ENCODE measurements at regions of chr14 and their contacts with region 1.

Region 1: GRCh38 chr14:22375321-22375930 is 213.6 kb downstream of the DAD1 start:
- DNase-seq: no peak
- ATAC-seq: peak; percentile 75
- H3K4me3 ChIP-seq: no peak overlapping the region
- H3K27ac ChIP-seq: no peak overlapping the region
- H3K4me1 ChIP-seq: no peaks in the 10 kb centered on the region
- H3K27me3 ChIP-seq: no peaks in the 10 kb centered on the region
- CTCF ChIP-seq: peak; percentile 50 to 60 (median 50)
- EP300 ChIP-seq: no peak
- POLR2A ChIP-seq: no peak
- RAD21 ChIP-seq: peak; percentile 79

Region 2: DNA sequence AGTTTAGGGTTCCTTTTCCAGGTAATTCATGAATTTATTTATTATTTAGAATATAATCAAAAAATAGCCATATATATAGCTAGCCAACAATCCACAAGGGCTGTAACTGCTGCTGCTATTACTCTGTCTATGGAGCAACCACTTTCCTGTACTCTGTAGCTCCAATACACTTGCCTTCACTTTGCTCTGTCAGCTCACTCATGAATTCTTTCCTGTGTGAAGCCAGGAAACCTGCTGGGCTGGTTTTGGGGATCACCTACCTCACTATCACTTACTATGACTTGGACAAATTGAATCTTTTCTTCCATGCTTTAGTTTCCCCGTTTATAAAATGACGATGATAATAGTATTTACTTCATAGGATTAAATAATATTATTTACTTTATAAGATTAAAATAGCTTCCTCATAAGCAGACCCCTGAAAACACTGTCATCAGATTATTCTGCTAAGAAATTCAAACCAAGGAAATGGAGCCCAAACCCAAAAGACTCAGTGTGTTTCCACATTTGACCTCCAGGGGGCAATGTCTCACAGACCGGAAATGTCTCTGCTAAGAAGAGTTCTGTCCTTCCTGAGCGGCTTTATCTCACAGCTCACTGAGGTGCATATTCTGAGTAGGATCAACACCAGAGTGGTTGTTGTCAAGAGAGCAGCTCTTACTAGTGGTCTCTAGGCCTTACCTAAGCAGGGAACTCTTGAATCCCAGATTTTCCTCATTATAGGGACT is 243.5 kb before region 1 on chr14:
- CTCF ChIA-PET with region 1: no interaction called
- POLR2A ChIA-PET with region 1: no interaction called
- RAD21 ChIA-PET with region 1: no interaction called
- SMC1A ChIA-PET with region 1: no interaction called
- in situ Hi-C with region 1: no loop called
- intact Hi-C with region 1: no loop called
- DNase-seq: no peak
- ATAC-seq: no peak
- H3K4me3 ChIP-seq: no peak overlapping the region
- H3K27ac ChIP-seq: no peak overlapping the region
- H3K4me1 ChIP-seq: no peaks in the 10 kb centered on the region
- H3K27me3 ChIP-seq: no peaks in the 10 kb centered on the region
- CTCF ChIP-seq: peak; percentile 23 to 61 (median 39); a peak in 5 of 6 replicates
- EP300 ChIP-seq: no peak
- POLR2A ChIP-seq: no peak
- RAD21 ChIP-seq: no peak

Region 3: GRCh38 chr14:22200977-22201605 is 174.3 kb before region 1 on chr14:
- CTCF ChIA-PET with region 1: interaction called, 18 read pairs
- POLR2A ChIA-PET with region 1: no interaction called
- RAD21 ChIA-PET with region 1: interaction called, 5 read pairs
- SMC1A ChIA-PET with region 1: interaction called, 5 read pairs
- in situ Hi-C with region 1: no loop called
- intact Hi-C with region 1: no loop called
- DNase-seq: peak; percentile 3
- ATAC-seq: peak; percentile 93
- H3K4me3 ChIP-seq: no peak overlapping the region
- H3K27ac ChIP-seq: no peak overlapping the region
- H3K4me1 ChIP-seq: no peaks in the 10 kb centered on the region
- H3K27me3 ChIP-seq: no peaks in the 10 kb centered on the region; a peak in 1 of 4 replicates
- CTCF ChIP-seq: peak; percentile 64 to 72 (median 65); a peak in 5 of 6 replicates
- EP300 ChIP-seq: no peak
- POLR2A ChIP-seq: no peak
- RAD21 ChIP-seq: peak; percentile 64

Region 4: GRCh38 chr14:22276913-22277816 is 98.3 kb before region 1 on chr14:
- CTCF ChIA-PET with region 1: interaction called, 10 read pairs
- POLR2A ChIA-PET with region 1: no interaction called
- RAD21 ChIA-PET with region 1: interaction called, 6 read pairs
- SMC1A ChIA-PET with region 1: interaction called, 36 read pairs
- in situ Hi-C with region 1: no loop called
- intact Hi-C with region 1: no loop called
- DNase-seq: no peak
- ATAC-seq: 0 out of 3 replicates have a peak, but pooled peaks have one; percentile 31
- H3K4me3 ChIP-seq: no peak overlapping the region
- H3K27ac ChIP-seq: no peak overlapping the region
- H3K4me1 ChIP-seq: no peaks in the 10 kb centered on the region
- H3K27me3 ChIP-seq: peaks cover 0 to 5% of the 10 kb centered on the region in 2 experiments; a peak in 3 of 4 replicates
- CTCF ChIP-seq: peak; percentile 53 to 69 (median 56)
- EP300 ChIP-seq: no peak
- POLR2A ChIP-seq: no peak
- RAD21 ChIP-seq: peak; percentile 49

Region 5: DNA sequence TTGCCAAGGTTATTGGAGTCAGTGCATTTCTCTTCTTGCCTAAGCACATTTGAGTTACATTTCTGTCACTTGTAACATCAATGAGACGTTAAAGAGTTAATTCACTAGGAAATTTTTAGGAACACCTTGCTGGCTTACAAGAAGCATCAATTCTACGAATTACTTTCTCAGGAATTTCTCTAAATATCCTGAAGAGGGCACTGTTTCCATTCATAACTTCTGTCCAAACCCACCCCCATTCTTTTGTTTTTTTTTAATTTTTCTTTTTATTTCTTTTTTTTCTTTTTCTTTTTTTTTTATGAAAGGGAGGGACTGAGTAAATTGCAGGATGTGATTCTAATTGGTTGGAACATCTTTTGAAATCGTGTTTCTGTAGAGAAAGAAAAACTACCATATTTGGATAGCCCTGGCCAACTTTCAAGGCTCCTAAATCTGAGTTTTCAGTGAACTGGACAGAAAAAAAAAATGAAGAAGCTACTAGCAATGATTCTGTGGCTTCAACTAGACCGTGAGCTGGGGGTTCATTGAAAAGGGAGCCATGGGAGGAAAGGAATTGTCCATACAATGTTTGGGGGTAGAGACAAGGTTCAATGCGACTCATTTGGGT is 71.7 kb before region 1 on chr14:
- CTCF ChIA-PET with region 1: interaction called, 22 read pairs
- POLR2A ChIA-PET with region 1: no interaction called
- RAD21 ChIA-PET with region 1: interaction called, 7 read pairs
- SMC1A ChIA-PET with region 1: interaction called, 14 read pairs
- in situ Hi-C with region 1: no loop called
- intact Hi-C with region 1: no loop called
- DNase-seq: no peak
- ATAC-seq: no peak
- H3K4me3 ChIP-seq: no peak overlapping the region
- H3K27ac ChIP-seq: no peak overlapping the region
- H3K4me1 ChIP-seq: no peaks in the 10 kb centered on the region
- H3K27me3 ChIP-seq: 0 out of 4 replicates have a peak, but pooled peaks cover 0 to 5% of the 10 kb centered on the region in 2 experiments
- CTCF ChIP-seq: peak; percentile 39 to 48 (median 44); a peak in 4 of 6 replicates
- EP300 ChIP-seq: no peak
- POLR2A ChIP-seq: no peak
- RAD21 ChIP-seq: peak; percentile 61

Region 6: GRCh38 chr14:22333422-22334276 is 41.8 kb before region 1 on chr14:
- CTCF ChIA-PET with region 1: interaction called, 22 read pairs
- POLR2A ChIA-PET with region 1: no interaction called
- RAD21 ChIA-PET with region 1: interaction called, 4 read pairs
- SMC1A ChIA-PET with region 1: interaction called, 8 read pairs
- in situ Hi-C with region 1: no loop called
- intact Hi-C with region 1: loop called (anchors 5 kb)
- DNase-seq: no peak
- ATAC-seq: peak; percentile 64
- H3K4me3 ChIP-seq: no peak overlapping the region
- H3K27ac ChIP-seq: no peak overlapping the region
- H3K4me1 ChIP-seq: no peaks in the 10 kb centered on the region
- H3K27me3 ChIP-seq: no peaks in the 10 kb centered on the region
- CTCF ChIP-seq: no peak
- EP300 ChIP-seq: peak in 1 of 2 experiments; percentile 26; a peak in 1 of 4 replicates
- POLR2A ChIP-seq: no peak
- RAD21 ChIP-seq: no peak

Region 7: DNA sequence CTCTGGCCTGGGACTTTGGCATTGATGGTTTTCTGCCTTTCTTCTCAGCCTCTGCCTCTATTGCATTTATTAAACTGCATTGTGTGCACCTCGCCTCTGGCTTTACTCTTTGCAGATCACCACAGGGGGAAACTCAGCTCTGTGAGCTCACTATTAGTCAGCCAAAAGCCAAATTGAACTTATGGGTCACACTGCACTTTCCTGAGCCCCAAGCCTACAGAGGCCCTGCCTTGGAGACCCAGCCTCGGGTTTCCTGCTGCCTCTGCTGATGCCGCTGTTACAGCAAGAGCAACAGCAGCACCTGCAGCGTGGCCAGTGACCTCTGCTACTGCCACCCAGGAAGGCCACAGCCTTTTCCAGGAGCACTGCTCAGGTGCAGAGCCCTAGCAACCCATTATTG is 91.1 kb after region 1 on chr14:
- CTCF ChIA-PET with region 1: interaction called, 142 read pairs
- POLR2A ChIA-PET with region 1: interaction called, 4 read pairs
- RAD21 ChIA-PET with region 1: interaction called, 272 read pairs
- SMC1A ChIA-PET with region 1: interaction called, 912 read pairs
- in situ Hi-C with region 1: no loop called
- intact Hi-C with region 1: no loop called
- DNase-seq: no peak
- ATAC-seq: peak; percentile 71
- H3K4me3 ChIP-seq: no peak overlapping the region
- H3K27ac ChIP-seq: peak overlapping the region; percentile 86
- H3K4me1 ChIP-seq: peaks cover 52% of the 10 kb centered on the region
- H3K27me3 ChIP-seq: no peaks in the 10 kb centered on the region
- CTCF ChIP-seq: 0 out of 6 replicates have a peak, but pooled peaks of 1 of the 3 experiments have one; percentile 12
- EP300 ChIP-seq: no peak
- POLR2A ChIP-seq: no peak
- RAD21 ChIP-seq: peak; percentile 40; the same call in 1 of the 2 replicates